Activated T-helper 2 cell treated with anti-CD3 and anti-CD28 coated beads, Interferon-gamma antibody, Interleukin-2, Interleukin-4, amounts not matched to agents 10 μg/mL and 5 μg/mL and 100 μg/mL, durations not matched to agents 14 hours and 24 hours and 36 hours (primary cell): ENCODE measurements at regions of chr19 and their contacts with region 1.

Region 1: GRCh38 chr19:3100081-3100864 is 6.1 kb downstream of the GNA11 start:
- DNase-seq: no peak
- H3K4me3 Mint-ChIP-seq: no peak overlapping the region
- H3K27ac Mint-ChIP-seq: no peak overlapping the region
- H3K4me1 Mint-ChIP-seq: peaks cover 18% of the 10 kb centered on the region
- H3K27me3 Mint-ChIP-seq: peaks cover 20% of the 10 kb centered on the region

Region 2: GRCh38 chr19:2950286-2951124 is 149.8 kb before region 1 on chr19:
- intact Hi-C with region 1: loop called (anchors 5 kb)
- DNase-seq: peak; percentile 100
- H3K4me3 Mint-ChIP-seq: peak overlapping the region; percentile 88
- H3K27ac Mint-ChIP-seq: peak overlapping the region; percentile 87
- H3K4me1 Mint-ChIP-seq: peaks cover 18% of the 10 kb centered on the region
- H3K27me3 Mint-ChIP-seq: no peaks in the 10 kb centered on the region